Mammary epithelial cell (primary cell): ENCODE measurements at regions of chr12 and their contacts with region 1.

Region 1: GRCh38 chr12:56299853-56300643 is at the start of gene CS:
- DNase-seq: peak; percentile 98
- H3K4me3 ChIP-seq: peak within 1 kb of the TSS; percentile 82 to 99 (median 93)
- H3K27ac ChIP-seq: peak within 1 kb of the TSS; percentile 88
- H3K4me1 ChIP-seq: peaks cover 13% of the 10 kb centered on the region
- H3K27me3 ChIP-seq: no peaks in the 10 kb centered on the region
- CTCF ChIP-seq: no peak
- total RNA-seq, gene CS: 81.4 to 169 TPM

Region 2: GRCh38 chr12:56158029-56158925 is 141.8 kb before region 1 on chr12 and contains the start of gene MYL6:
- CTCF ChIA-PET with region 1: no interaction called
- dilution Hi-C with region 1: no loop called
- in situ Hi-C with region 1: no loop called
- intact Hi-C with region 1: no loop called
- DNase-seq: peak; percentile 95
- H3K4me3 ChIP-seq: peak within 1 kb of the TSS; percentile 72 to 92 (median 82)
- H3K27ac ChIP-seq: peak within 1 kb of the TSS; percentile 96
- H3K4me1 ChIP-seq: peaks cover 26% of the 10 kb centered on the region
- H3K27me3 ChIP-seq: no peaks in the 10 kb centered on the region
- CTCF ChIP-seq: no peak
- total RNA-seq, gene MYL6: 732 to 1,042 TPM

Region 3: GRCh38 chr12:56206457-56207166 is 93.4 kb before region 1 on chr12:
- CTCF ChIA-PET with region 1: interaction called, 10 read pairs
- dilution Hi-C with region 1: no loop called
- in situ Hi-C with region 1: no loop called
- intact Hi-C with region 1: no loop called
- DNase-seq: peak; percentile 50
- H3K4me3 ChIP-seq: no peak overlapping the region
- H3K27ac ChIP-seq: no peak overlapping the region
- H3K4me1 ChIP-seq: no peaks in the 10 kb centered on the region
- H3K27me3 ChIP-seq: no peaks in the 10 kb centered on the region
- CTCF ChIP-seq: peak; percentile 71

Region 4: GRCh38 chr12:56266693-56267442 is 33.2 kb before region 1 on chr12 and contains the start of gene COQ10A:
- CTCF ChIA-PET with region 1: no interaction called
- dilution Hi-C with region 1: no loop called
- in situ Hi-C with region 1: no loop called
- intact Hi-C with region 1: loop called (anchors 1 kb)
- DNase-seq: peak; percentile 79
- H3K4me3 ChIP-seq: peak within 1 kb of the TSS; percentile 43 to 95 (median 74)
- H3K27ac ChIP-seq: peak within 1 kb of the TSS; percentile 38
- H3K4me1 ChIP-seq: peaks cover 17% of the 10 kb centered on the region
- H3K27me3 ChIP-seq: no peaks in the 10 kb centered on the region
- CTCF ChIP-seq: peak; percentile 54 to 81
- total RNA-seq, gene COQ10A: 3.7 to 4.2 TPM

Region 5: GRCh38 chr12:56286044-56286830 is 13.8 kb before region 1 on chr12:
- CTCF ChIA-PET with region 1: no interaction called
- dilution Hi-C with region 1: no loop called
- in situ Hi-C with region 1: no loop called
- intact Hi-C with region 1: loop called (anchors 1 kb)
- DNase-seq: no peak
- H3K4me3 ChIP-seq: no peak overlapping the region
- H3K27ac ChIP-seq: no peak overlapping the region
- H3K4me1 ChIP-seq: peaks cover 6% of the 10 kb centered on the region
- H3K27me3 ChIP-seq: no peaks in the 10 kb centered on the region
- CTCF ChIP-seq: no peak

Region 6: GRCh38 chr12:56315622-56316473 is 15.8 kb after region 1 on chr12 and contains the start of gene CNPY2:
- CTCF ChIA-PET with region 1: no interaction called
- dilution Hi-C with region 1: no loop called
- in situ Hi-C with region 1: no loop called
- intact Hi-C with region 1: loop called (anchors 1 kb)
- DNase-seq: peak; percentile 99
- H3K4me3 ChIP-seq: peak within 1 kb of the TSS; percentile 94 to 96 (median 95)
- H3K27ac ChIP-seq: peak within 1 kb of the TSS; percentile 89
- H3K4me1 ChIP-seq: peaks cover 17% of the 10 kb centered on the region
- H3K27me3 ChIP-seq: no peaks in the 10 kb centered on the region
- CTCF ChIP-seq: peak in 1 of 2 donors; percentile 18
- total RNA-seq, gene CNPY2: 49.3 to 114 TPM